ENCODE measurements at regions of chrX and their contacts with region 1.

Region 1: GRCh38 chrX:14029425-14030173 is at the start of gene GEMIN8:
- DNase-seq: peak; percentile 95 to 97
- ATAC-seq: peak; percentile 98
- H3K4me3 ChIP-seq: peak within 1 kb of the TSS; percentile 80 to 87
- H3K27ac ChIP-seq: peak within 1 kb of the TSS in 1 of 2 donors; percentile 72
- H3K4me1 ChIP-seq: no peaks in the 10 kb centered on the region
- H3K27me3 ChIP-seq: no peaks in the 10 kb centered on the region
- total RNA-seq, gene GEMIN8: 14.8 to 25.3 TPM

Region 2: GRCh38 chrX:13506574-13506973 is 523.0 kb before region 1 on chrX:
- intact Hi-C with region 1: loop called (anchors 5 kb)
- DNase-seq: peak in 1 of 2 donors; percentile 80
- ATAC-seq: no peak
- H3K4me3 ChIP-seq: no peak overlapping the region
- H3K27ac ChIP-seq: no peak overlapping the region
- H3K4me1 ChIP-seq: no peaks in the 10 kb centered on the region
- H3K27me3 ChIP-seq: no peaks in the 10 kb centered on the region

Region 3: GRCh38 chrX:13653022-13653693 is 376.4 kb before region 1 on chrX and contains the start of gene TCEANC:
- intact Hi-C with region 1: loop called (anchors 2 kb)
- DNase-seq: peak; percentile 99
- ATAC-seq: peak; percentile 99
- H3K4me3 ChIP-seq: peak within 1 kb of the TSS; percentile 59 to 77
- H3K27ac ChIP-seq: peak within 1 kb of the TSS; percentile 32 to 92
- H3K4me1 ChIP-seq: peaks cover 0 to 2% of the 10 kb centered on the region in 2 donors
- H3K27me3 ChIP-seq: no peaks in the 10 kb centered on the region
- total RNA-seq, gene TCEANC: 2.3 to 3.9 TPM

Region 4: DNA sequence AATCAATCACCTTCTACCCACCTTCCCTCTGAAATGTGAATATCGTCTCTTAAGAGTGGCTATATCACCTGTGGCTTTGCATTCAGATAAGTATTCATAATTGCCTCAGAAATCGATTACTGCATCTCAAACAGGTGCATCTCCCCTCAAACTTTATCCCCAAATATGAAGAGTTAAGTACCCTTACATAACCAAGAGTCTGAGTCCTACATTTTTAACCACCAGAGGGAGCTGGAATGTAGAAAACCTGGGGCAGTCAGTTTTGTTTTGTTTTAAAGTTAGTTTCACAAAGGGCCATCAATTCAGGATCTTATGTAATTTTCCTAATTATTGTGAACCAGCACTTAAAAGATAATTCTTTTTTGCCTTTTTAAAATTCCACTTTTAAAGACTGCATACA is 371.0 kb before region 1 on chrX:
- intact Hi-C with region 1: loop called (anchors 2 kb)
- DNase-seq: no peak
- ATAC-seq: peak; percentile 75
- H3K4me3 ChIP-seq: no peak overlapping the region
- H3K27ac ChIP-seq: no peak overlapping the region
- H3K4me1 ChIP-seq: no peaks in the 10 kb centered on the region
- H3K27me3 ChIP-seq: no peaks in the 10 kb centered on the region

Region 5: DNA sequence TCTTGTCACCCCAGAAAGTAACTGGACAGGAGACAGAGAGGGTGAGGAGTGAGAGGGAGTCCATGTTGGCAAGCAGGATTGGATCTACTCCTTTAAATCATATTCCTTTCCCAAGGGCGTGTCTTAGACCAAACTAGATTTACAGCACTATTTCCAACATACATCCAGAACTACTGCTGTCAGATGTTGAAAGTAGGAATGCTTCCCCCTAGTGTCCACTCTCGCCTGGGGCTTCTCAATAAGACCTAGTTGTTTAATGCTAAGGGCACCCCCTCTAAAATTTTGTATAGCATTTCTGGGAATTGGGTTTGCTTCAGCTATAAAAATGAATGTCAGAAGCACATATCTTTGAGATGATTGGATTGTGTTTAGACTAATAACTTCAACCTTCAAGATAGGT is 281.8 kb before region 1 on chrX:
- intact Hi-C with region 1: loop called (anchors 5 kb)
- DNase-seq: no peak
- ATAC-seq: no peak
- H3K4me3 ChIP-seq: no peak overlapping the region
- H3K27ac ChIP-seq: no peak overlapping the region
- H3K4me1 ChIP-seq: no peaks in the 10 kb centered on the region
- H3K27me3 ChIP-seq: no peaks in the 10 kb centered on the region

Region 6: GRCh38 chrX:13759152-13759718 is 270.4 kb before region 1 on chrX:
- intact Hi-C with region 1: loop called in 1 of 2 experiments (anchors 5 kb)
- DNase-seq: no peak
- ATAC-seq: no peak
- H3K4me3 ChIP-seq: no peak overlapping the region
- H3K27ac ChIP-seq: no peak overlapping the region
- H3K4me1 ChIP-seq: peaks cover 0 to 2% of the 10 kb centered on the region in 2 donors
- H3K27me3 ChIP-seq: no peaks in the 10 kb centered on the region

Region 7: DNA sequence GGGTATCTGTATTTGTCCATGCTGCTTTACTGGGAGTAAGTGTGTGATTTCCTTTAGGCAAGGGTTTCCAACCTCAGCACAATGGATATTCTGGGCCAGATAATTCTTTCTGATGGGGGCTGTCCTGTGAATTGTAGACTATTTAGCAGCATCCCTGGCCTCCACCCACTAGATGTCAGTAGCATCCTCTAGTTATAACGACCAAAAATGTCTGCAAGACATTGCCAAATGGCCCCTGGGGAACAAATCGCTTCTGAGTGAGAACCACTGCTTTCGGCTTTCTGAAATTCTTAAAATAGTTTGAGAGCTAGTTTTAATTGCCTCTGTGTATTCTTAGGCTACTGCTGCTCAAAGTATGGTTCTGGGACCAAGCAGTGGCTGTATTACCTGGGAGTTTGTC is 131.5 kb before region 1 on chrX:
- intact Hi-C with region 1: loop called (anchors 2 to 5 kb)
- DNase-seq: no peak
- ATAC-seq: no peak
- H3K4me3 ChIP-seq: no peak overlapping the region
- H3K27ac ChIP-seq: no peak overlapping the region
- H3K4me1 ChIP-seq: peaks cover 2 to 7% of the 10 kb centered on the region in 2 donors
- H3K27me3 ChIP-seq: no peaks in the 10 kb centered on the region

Measured in aorta (tissue), 5 donors.